A673 (cell line): ENCODE measurements at regions of chr1 and their contacts with region 1.

Region 1: GRCh38 chr1:8727809-8728213 is 89.6 kb downstream of the RERE start:
- DNase-seq: peak; percentile 27
- H3K4me3 ChIP-seq: no peak overlapping the region
- H3K27ac ChIP-seq: peak overlapping the region; percentile 55
- H3K4me1 ChIP-seq: peaks cover 38% of the 10 kb centered on the region
- H3K27me3 ChIP-seq: no peaks in the 10 kb centered on the region
- CTCF ChIP-seq: no peak

Region 2: GRCh38 chr1:8554956-8555534 is 172.8 kb before region 1 on chr1:
- CTCF ChIA-PET with region 1: interaction called, 12 read pairs
- POLR2A ChIA-PET with region 1: no interaction called
- intact Hi-C with region 1: no loop called
- DNase-seq: peak; percentile 55
- H3K4me3 ChIP-seq: no peak overlapping the region
- H3K27ac ChIP-seq: peak overlapping the region; percentile 27
- H3K4me1 ChIP-seq: peaks cover 33% of the 10 kb centered on the region
- H3K27me3 ChIP-seq: no peaks in the 10 kb centered on the region
- CTCF ChIP-seq: no peak

Region 3: DNA sequence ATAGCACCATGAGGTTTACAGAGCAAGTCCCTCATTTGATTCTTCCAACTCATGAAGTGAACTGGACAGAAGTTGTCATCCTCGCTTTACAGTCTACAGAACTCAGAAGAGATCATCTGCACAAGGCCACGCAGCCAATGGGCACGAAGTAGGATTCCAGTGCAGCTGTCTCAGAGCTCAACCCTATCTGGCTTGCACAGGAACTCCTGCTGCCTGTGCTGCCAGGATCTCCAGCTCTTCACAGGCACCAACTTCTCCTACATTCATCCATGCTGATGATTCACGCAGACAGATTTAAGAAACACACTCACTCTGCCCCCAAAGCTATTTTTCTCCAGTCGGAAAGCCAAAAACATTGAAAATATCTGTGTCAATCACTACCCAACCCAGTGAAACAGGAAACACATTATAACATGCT is 67.4 kb before region 1 on chr1:
- CTCF ChIA-PET with region 1: no interaction called
- POLR2A ChIA-PET with region 1: no interaction called
- intact Hi-C with region 1: no loop called
- DNase-seq: peak; percentile 92
- H3K4me3 ChIP-seq: peak overlapping the region; percentile 5
- H3K27ac ChIP-seq: peak overlapping the region; percentile 95
- H3K4me1 ChIP-seq: peaks cover 61% of the 10 kb centered on the region
- H3K27me3 ChIP-seq: no peaks in the 10 kb centered on the region
- CTCF ChIP-seq: no peak

Region 4: DNA sequence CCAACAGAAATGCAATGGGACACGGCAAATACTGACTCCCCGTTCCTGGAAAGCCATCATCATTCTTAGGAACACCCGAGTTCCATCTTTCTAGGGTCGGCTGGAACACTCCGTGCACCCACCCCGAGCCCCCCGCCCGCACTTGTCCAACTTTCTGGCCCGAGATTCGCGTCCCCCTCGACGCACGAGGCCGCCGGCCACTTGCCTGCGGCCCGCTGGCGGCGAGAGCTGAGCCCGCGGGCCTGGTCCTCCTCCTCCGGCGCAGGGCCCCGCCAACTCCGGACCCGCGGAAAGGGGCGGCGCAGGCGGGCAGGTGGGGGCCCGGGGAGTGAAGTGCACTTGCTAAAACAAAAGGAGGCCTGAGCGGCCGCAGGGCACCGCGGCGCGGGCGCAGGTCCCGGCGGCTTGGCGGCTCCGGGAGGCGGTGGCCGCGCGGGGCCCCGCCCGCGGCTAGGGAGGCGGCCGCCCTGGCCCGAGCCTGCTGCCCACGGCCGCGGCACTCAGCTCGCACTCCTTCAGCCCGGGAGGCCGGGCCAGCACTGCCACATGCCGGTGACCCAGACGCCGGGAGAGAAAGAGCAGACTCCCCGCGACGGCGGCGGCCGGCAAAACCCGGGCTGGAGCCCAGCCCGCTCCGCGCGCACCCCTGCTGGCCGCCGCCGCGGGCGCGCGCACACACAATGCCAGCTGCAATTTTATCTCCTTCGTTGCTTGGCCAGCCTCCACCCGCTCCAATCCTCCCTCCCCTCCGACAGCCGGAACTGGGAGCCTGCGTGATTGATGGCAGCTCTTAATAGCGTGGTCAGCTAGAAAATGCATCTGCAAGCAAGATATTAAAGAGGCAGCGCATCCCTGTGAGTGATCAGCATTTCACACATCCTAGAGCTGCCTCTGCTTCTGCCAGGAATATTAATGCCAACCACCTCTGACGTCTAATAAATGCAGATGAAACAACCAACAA is 24.7 kb before region 1 on chr1:
- CTCF ChIA-PET with region 1: interaction called, 12 read pairs
- POLR2A ChIA-PET with region 1: no interaction called
- intact Hi-C with region 1: no loop called
- DNase-seq: peak; percentile 98
- H3K4me3 ChIP-seq: peak overlapping the region; percentile 72
- H3K27ac ChIP-seq: peak overlapping the region; percentile 95
- H3K4me1 ChIP-seq: peaks cover 64% of the 10 kb centered on the region
- H3K27me3 ChIP-seq: no peaks in the 10 kb centered on the region
- CTCF ChIP-seq: no peak

Region 5: DNA sequence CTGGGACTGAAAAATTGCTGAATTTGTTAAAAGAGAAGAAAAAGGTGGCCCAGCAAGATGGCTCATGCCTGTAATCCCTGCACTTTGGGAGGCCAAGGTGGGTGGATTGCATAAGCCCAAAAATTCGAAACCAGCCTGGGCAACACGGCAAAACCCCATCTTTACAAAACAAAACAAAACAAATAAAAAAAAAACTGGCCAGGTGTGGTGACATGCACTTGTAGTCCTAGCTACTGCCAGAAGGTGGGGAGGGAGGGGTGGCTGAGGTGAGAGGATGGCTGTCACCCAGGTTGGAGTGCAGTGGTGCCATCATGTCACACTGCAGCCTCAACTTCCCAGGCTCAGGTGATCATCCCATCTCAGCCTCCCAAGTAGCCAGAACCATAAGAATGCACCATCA is 66.8 kb after region 1 on chr1:
- CTCF ChIA-PET with region 1: no interaction called
- POLR2A ChIA-PET with region 1: no interaction called
- intact Hi-C with region 1: no loop called
- DNase-seq: no peak
- H3K4me3 ChIP-seq: no peak overlapping the region
- H3K27ac ChIP-seq: no peak overlapping the region
- H3K4me1 ChIP-seq: peaks cover 6% of the 10 kb centered on the region
- H3K27me3 ChIP-seq: no peaks in the 10 kb centered on the region
- CTCF ChIP-seq: no peak